Activated T-helper 1 cell treated with anti-CD3 and anti-CD28 coated beads, Interleukin-12 subunit alpha, Interleukin-12 subunit beta, Interleukin-2, Interleukin-4 antibody, amounts not matched to agents 30 ng/mL and 10 ng/mL and 1 ng/mL, durations not matched to agents 14 hours and 24 hours and 36 hours (primary cell): ENCODE measurements at regions of chr4 and their contacts with region 1.

Region 1: DNA sequence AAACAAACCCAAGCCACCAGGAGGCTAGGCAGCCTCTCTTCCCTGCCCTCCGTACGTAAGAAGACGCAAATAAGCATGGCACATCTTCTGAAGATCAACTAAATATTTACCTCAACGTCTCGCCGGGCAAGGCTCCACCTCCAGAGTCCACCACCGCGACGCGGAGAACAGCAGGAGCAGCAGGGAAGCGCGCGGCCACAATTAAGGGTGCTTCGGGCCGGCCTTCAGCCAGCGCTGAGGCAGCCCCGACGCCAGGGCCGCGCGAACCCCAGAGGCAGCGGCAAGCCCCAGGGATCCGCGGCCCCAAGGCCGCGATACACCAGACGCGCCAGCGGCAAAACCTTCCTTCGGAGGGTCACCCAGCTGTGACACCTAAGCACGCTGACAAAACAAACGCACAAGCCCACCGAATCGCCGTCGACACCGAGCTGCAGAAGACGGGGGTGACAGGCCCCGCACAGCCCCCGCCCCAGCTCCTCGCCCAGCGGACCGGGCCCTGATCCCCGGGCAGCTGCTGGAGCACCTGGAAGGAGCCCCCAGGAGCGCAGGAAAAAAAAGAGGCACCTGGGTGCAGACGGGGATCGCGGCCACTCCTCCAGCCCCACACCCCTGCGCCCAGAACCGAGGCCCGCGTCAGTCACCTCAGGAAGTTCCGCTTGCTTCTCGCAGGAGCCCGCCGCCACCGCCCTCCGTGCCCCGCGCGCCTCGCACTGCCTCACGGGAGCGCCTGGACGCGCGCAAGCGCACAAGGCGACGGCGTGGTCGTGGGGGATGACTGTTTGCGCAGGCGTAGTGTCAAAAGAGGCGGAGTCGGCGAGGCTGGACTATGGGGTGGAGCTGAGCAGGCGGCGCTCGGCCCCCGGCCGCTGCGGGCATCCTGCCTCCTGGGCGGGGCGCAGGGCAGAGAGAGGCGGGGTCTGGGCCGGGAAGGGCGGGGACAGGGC is at the starts of genes HAUS3 and POLN:
- DNase-seq: peak; percentile 100
- H3K4me3 Mint-ChIP-seq: peak within 1 kb of the TSS; percentile 85
- H3K27ac Mint-ChIP-seq: peak within 1 kb of the TSS; percentile 90
- H3K4me1 Mint-ChIP-seq: peaks cover 53% of the 10 kb centered on the region
- H3K27me3 Mint-ChIP-seq: peaks cover 2% of the 10 kb centered on the region
- total RNA-seq, gene HAUS3: 19.2 and 19.9 TPM in 2 replicates
- total RNA-seq, gene POLN: 2.1 and 3.5 TPM in 2 replicates

Region 2: GRCh38 chr4:1712216-1713002 is 529.3 kb before region 1 on chr4 and contains the start of gene SLBP:
- intact Hi-C with region 1: loop called (anchors 1 kb)
- DNase-seq: peak; percentile 99
- H3K4me3 Mint-ChIP-seq: peak within 1 kb of the TSS; percentile 99
- H3K27ac Mint-ChIP-seq: peak within 1 kb of the TSS; percentile 89
- H3K4me1 Mint-ChIP-seq: peaks cover 59% of the 10 kb centered on the region
- H3K27me3 Mint-ChIP-seq: no peaks in the 10 kb centered on the region
- total RNA-seq, gene SLBP: 136 and 140 TPM in 2 replicates

Region 3: GRCh38 chr4:2041234-2042130 is 200.2 kb before region 1 on chr4:
- intact Hi-C with region 1: loop called (anchors 2 kb)
- DNase-seq: peak; percentile 87
- H3K4me3 Mint-ChIP-seq: peak overlapping the region; percentile 84
- H3K27ac Mint-ChIP-seq: no peak overlapping the region
- H3K4me1 Mint-ChIP-seq: peaks cover 7% of the 10 kb centered on the region
- H3K27me3 Mint-ChIP-seq: peaks cover 31% of the 10 kb centered on the region

Region 4: GRCh38 chr4:2418650-2419571 is 177.2 kb after region 1 on chr4 and contains the start of gene CFAP99:
- intact Hi-C with region 1: loop called (anchors 1 kb)
- DNase-seq: peak; percentile 94
- H3K4me3 Mint-ChIP-seq: peak within 1 kb of the TSS; percentile 85
- H3K27ac Mint-ChIP-seq: peak within 1 kb of the TSS; percentile 82
- H3K4me1 Mint-ChIP-seq: peaks cover 39% of the 10 kb centered on the region
- H3K27me3 Mint-ChIP-seq: peaks cover 55% of the 10 kb centered on the region
- total RNA-seq, gene CFAP99: not detected in 2 replicates

Region 5: DNA sequence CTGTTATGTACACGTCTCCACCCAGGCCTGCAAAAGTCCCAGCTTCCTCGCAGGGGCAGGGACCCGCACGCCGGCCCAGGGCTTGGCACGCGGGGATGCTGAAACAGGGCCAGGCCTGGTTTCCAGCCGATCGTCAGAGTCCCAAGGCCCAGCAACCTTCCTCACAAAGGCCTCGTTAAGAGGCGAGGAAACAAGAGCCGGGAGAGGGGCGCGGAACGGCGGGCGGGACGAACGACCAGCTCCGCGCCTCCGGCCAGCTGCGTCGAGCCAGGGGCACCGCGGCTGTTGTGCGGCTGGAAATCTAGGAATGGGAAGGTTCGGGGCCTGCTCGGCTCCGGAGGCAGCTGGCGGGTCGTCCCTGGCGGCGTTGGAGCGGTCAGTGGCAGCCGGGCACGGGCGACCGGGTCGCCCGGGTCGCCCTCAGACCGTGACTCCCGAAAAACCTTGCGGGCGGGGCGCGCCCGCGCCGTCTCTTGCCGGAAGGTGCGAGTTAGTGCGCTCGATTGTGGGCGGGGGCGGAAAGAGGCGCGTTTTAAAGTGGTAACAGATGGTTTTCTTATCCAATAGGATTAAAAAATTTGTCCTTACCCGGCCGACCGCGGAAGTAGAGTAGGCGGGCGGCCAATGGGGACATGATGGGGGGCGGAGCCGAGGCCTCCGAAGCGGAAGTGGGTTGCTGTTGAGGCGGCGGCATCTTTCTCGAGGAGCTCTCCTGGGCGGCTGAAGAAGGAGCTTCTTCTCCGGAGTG is 226.9 kb after region 1 on chr4 and contains the start of gene RNF4:
- intact Hi-C with region 1: loop called (anchors 1 kb)
- DNase-seq: peak; percentile 94
- H3K4me3 Mint-ChIP-seq: peak within 1 kb of the TSS; percentile 95
- H3K27ac Mint-ChIP-seq: peak within 1 kb of the TSS; percentile 96
- H3K4me1 Mint-ChIP-seq: peaks cover 29% of the 10 kb centered on the region
- H3K27me3 Mint-ChIP-seq: peaks cover 1% of the 10 kb centered on the region
- total RNA-seq, gene RNF4: 93.7 and 112 TPM in 2 replicates